ENCODE measurements at regions of chr3 and their contacts with region 1.

Region 1: GRCh38 chr3:98817547-98818041 is 54.5 kb downstream of the ST3GAL6 start:
- DNase-seq: no peak
- ATAC-seq: peak; percentile 73 to 89 (median 74)
- H3K4me3 ChIP-seq: no peak overlapping the region
- H3K27ac ChIP-seq: no peak overlapping the region
- H3K4me1 ChIP-seq: no peaks in the 10 kb centered on the region
- H3K27me3 ChIP-seq: no peaks in the 10 kb centered on the region
- CTCF ChIP-seq: peak; percentile 83

Region 2: DNA sequence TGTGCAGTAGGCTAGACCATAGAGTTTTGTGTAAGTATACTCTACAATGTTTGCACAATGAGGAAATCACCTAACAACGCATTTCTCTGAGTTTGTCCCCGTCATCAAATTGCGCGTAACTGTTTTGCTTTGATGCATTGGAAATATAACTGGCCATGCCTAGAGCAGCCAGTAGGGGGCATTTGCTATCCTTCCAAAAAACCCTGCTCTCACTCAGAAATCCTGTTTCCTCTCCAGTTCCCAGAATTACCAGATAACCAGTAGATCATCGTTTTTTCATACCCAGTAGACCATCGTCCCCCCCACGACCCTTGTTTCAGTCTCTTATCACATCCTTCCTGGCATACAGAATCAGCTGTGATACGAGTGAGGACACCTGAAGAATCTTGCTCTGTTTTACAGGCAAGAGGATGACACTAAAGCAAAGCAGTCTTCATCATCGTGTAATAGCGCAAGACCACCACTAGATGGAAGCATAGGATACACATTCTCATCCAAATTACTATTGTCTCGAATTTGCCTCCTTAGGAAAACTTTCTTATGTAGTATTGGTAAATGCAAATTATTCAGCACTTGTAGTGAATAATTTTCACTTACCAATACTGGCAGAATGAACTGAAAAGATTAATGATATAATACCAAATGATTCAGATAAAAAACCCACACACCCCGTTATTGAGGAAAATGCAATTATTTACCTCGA is 778.1 kb before region 1 on chr3:
- intact Hi-C with region 1: loop called (anchors 10 kb)
- DNase-seq: peak in 1 of 2 donors; percentile 28
- ATAC-seq: peak; percentile 87 to 93 (median 90)
- H3K4me3 ChIP-seq: peak overlapping the region; percentile 42
- H3K27ac ChIP-seq: no peak overlapping the region
- H3K4me1 ChIP-seq: no peaks in the 10 kb centered on the region
- H3K27me3 ChIP-seq: peaks cover 0 to 4% (median 4%) of the 10 kb centered on the region in 3 donors
- CTCF ChIP-seq: peak; percentile 79

Region 3: GRCh38 chr3:98322101-98322500 is 495.5 kb before region 1 on chr3:
- intact Hi-C with region 1: no loop called
- DNase-seq: no peak
- ATAC-seq: no peak
- H3K4me3 ChIP-seq: no peak overlapping the region
- H3K27ac ChIP-seq: no peak overlapping the region
- H3K4me1 ChIP-seq: no peaks in the 10 kb centered on the region
- H3K27me3 ChIP-seq: no peaks in the 10 kb centered on the region
- CTCF ChIP-seq: no peak

Region 4: GRCh38 chr3:98994128-98994762 is 176.7 kb after region 1 on chr3:
- intact Hi-C with region 1: loop called (anchors 1 to 2 kb)
- DNase-seq: no peak
- ATAC-seq: peak in 1 of 4 donors; percentile 46
- H3K4me3 ChIP-seq: no peak overlapping the region
- H3K27ac ChIP-seq: no peak overlapping the region
- H3K4me1 ChIP-seq: no peaks in the 10 kb centered on the region
- H3K27me3 ChIP-seq: no peaks in the 10 kb centered on the region
- CTCF ChIP-seq: peak; percentile 74

Region 5: DNA sequence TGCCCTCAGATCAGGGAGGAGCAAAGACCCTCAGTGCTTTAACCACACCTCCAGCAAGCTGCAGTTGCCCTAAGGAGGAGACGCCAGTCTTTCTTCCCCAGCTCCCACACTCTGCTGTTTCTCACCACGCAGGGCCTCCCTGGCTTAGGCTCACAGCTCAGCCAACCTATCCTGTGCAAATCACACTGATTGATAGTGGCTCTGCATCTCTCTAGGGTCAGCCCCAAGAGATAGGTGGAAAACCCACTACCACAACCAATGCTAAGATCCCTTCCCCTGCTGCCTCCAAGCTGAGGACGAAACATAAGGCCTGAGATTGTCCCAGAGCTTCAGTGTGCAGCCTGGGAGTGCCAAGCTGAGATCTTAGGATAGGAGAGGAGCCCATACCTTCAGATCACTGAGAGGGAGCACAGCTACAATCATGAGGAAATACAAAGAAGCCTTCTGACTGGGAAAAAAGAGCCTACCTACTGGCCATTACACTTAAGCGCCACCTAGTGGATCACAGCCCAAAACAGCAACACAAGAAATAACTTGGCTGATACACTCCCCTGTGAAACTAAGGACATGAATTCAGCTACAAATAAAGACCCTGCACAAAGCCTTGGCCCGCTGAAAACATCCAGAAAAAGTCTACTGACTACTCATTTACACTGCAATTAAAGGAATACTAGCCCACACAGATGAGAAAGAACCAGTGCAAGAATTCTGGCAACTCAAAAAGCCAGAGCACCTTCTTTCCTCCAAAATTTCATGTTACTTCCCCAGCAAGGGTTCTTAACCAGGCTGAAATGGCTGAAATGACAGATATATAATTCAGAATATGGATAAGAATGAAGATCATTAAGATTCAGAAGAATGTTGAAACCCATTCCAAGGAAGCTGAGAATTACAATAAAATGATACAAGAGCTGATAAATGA is 355.4 kb after region 1 on chr3:
- intact Hi-C with region 1: loop called (anchors 5 to 10 kb)
- DNase-seq: no peak
- ATAC-seq: no peak
- H3K4me3 ChIP-seq: no peak overlapping the region
- H3K27ac ChIP-seq: no peak overlapping the region
- H3K4me1 ChIP-seq: no peaks in the 10 kb centered on the region
- H3K27me3 ChIP-seq: no peaks in the 10 kb centered on the region
- CTCF ChIP-seq: peak; percentile 45